ENCODE measurements at regions of chr11 and their contacts with region 1.

Region 1: GRCh38 chr11:122309262-122309925 is 193.4 kb upstream of the BLID start:
- DNase-seq: peak in 6 of 10 donors; percentile 20 to 75 (median 50)
- H3K4me3 ChIP-seq: peak overlapping the region; percentile 6 to 76 (median 59)
- H3K27ac ChIP-seq: peak overlapping the region; percentile 72 to 99 (median 94)
- H3K27me3 ChIP-seq: no peaks in the 10 kb centered on the region
- CTCF ChIP-seq: no peak

Region 2: GRCh38 chr11:122101625-122102291 is 207.6 kb before region 1 on chr11:
- intact Hi-C with region 1: loop called (anchors 2 to 5 kb)
- DNase-seq: peak; percentile 45 to 90 (median 81)
- H3K4me3 ChIP-seq: peak overlapping the region; percentile 58 to 91 (median 76)
- H3K27ac ChIP-seq: peak overlapping the region; percentile 91 to 99 (median 98)
- H3K27me3 ChIP-seq: no peaks in the 10 kb centered on the region
- CTCF ChIP-seq: peak; percentile 70 to 95 (median 85)

Region 3: GRCh38 chr11:122209619-122210366 is 99.6 kb before region 1 on chr11:
- intact Hi-C with region 1: loop called (anchors 2 to 5 kb)
- DNase-seq: peak in 3 of 10 donors; percentile 58 to 66 (median 60)
- H3K4me3 ChIP-seq: peak overlapping the region in 7 of 59 donors; percentile 4 to 23 (median 12)
- H3K27ac ChIP-seq: peak overlapping the region; percentile 67 to 99 (median 94)
- H3K27me3 ChIP-seq: no peaks in the 10 kb centered on the region
- CTCF ChIP-seq: peak in 12 of 56 donors; percentile 0 to 30 (median 16)

Region 4: DNA sequence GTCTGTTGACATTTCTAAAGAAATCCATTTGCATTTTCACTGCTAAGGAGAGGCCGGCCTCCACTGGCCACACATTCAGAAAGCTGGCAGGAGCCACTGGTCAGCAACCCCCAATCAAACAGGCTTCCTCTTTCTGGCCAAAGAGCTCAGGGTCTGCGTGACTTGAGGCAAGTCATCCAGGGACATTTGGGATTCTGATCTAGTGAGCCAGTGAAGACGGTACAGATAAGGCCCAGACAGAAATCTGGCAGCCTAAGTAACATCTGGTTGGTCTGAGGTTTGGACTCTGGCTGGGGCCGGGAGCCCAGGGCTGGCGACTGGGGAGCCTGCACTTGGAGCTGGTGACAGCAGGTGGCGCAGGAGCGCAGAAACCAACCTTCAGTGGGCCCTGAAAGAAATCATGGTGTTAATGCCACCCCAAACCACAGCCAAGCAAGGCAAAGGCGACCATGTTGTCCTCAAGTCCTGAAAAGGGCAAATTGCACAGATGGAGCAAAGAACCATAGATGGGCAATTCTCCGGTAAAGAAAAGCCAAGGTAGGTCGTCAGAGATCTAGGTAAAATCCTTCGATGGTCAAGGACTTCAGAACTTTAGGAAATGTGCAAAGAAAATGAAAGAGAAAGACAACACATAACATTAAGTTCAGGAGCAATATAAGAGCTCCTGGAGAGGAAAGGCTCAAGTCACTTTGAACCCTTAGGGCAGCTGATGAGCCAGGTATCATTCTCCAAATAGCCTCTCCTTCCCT is 94.0 kb before region 1 on chr11:
- intact Hi-C with region 1: loop called (anchors 2 to 5 kb)
- DNase-seq: peak; percentile 32 to 87 (median 76)
- H3K4me3 ChIP-seq: no peak overlapping the region
- H3K27ac ChIP-seq: peak overlapping the region; percentile 21 to 99 (median 96)
- H3K27me3 ChIP-seq: no peaks in the 10 kb centered on the region
- CTCF ChIP-seq: peak; percentile 44 to 97 (median 89)

Region 5: DNA sequence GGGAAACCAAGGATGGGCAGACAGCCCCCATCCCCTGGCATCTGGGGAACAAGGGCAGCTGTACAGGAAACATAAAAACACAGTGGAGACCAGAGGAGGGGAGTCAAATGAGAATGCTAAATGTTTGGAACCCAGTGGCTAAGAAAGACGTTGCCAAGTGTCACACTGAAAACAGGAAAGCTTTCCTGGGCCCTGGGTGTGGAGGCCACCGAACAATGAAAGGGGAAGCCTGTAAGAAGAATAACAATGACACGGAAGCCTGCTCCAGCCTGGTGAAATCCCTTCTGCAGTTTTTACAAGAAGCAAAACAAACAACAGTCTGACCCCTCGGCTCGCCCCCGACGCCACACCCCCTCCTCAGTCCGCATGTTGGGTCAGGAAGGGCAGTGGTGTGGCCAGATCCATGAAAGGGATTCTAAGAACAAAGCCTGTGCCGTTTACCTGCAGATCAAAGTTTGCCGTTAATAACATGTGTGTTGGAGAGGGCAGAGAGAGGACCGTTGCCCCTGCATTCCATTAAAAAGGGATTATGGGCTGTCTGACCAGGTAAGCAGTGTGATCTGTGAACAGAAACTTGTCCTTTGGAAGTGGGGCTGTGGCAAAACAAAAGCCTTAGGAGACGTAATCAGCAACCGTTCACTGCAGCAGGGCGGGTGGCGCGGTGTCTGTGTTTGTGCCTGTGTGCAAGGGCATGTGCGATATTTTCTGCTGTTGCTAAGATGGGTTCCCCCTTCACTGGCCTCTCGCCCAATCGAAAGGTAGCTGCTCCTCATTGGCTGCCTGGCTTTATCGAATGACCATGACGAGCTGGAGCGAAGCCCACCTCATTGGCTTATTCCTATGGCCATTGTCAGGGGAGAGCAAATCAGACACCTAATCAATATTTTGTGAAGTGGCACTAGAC is 79.7 kb before region 1 on chr11:
- intact Hi-C with region 1: loop called in 1 of 2 experiments (anchors 5 kb)
- DNase-seq: peak; percentile 28 to 92 (median 78)
- H3K4me3 ChIP-seq: peak overlapping the region in 50 of 59 donors; percentile 5 to 50 (median 26)
- H3K27ac ChIP-seq: peak overlapping the region; percentile 24 to 93 (median 84)
- H3K27me3 ChIP-seq: no peaks in the 10 kb centered on the region
- CTCF ChIP-seq: no peak

Region 6: GRCh38 chr11:122439911-122440810 is 130.8 kb after region 1 on chr11:
- intact Hi-C with region 1: loop called (anchors 5 kb)
- DNase-seq: peak in 4 of 10 donors; percentile 21 to 47 (median 23)
- H3K4me3 ChIP-seq: peak overlapping the region; percentile 44 to 82 (median 63)
- H3K27ac ChIP-seq: peak overlapping the region; percentile 30 to 97 (median 89)
- H3K27me3 ChIP-seq: no peaks in the 10 kb centered on the region
- CTCF ChIP-seq: peak in 1 of 56 donors; percentile 7

Measured in dorsolateral prefrontal cortex (tissue), 120 donors.